Left ventricle myocardium inferior (tissue), 1 donor: ENCODE measurements at regions of chr6 and their contacts with region 1.

Region 1: DNA sequence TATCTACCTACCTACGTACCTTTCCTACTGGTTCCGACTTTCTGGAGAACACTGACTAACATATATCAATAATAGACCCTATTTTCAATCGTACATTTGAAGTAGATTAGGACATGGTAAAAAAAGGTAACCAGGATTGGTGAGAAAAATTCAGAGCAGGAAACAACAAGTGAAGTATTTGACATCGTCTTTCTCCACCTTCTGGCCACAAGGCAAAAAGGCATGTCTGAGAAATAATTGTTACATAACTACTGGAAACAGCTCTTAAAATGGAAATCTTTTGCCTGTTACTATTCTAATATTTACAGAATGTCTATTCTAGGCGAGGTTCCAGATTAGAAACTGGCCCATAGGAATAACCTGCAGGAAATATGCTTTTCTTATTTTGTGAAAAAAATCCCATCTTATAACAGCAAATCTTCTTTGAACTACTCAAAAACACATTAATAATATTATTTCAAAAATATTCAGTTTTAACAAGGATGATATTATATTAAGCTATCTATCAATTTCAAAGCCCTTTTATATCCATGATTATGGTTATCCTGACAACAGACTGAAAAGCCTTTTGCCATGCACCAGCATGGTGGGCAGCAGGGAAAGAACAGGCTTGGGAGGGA is 80.8 kb downstream of the RCAN2 start:
- DNase-seq: no peak
- H3K4me3 ChIP-seq: no peak overlapping the region
- H3K27ac ChIP-seq: peak overlapping the region; percentile 65
- H3K4me1 ChIP-seq: peaks cover 90% of the 10 kb centered on the region
- H3K27me3 ChIP-seq: no peaks in the 10 kb centered on the region
- CTCF ChIP-seq: peak; percentile 92

Region 2: GRCh38 chr6:46090115-46091079 is 320.0 kb before region 1 on chr6:
- intact Hi-C with region 1: loop called (anchors 5 kb)
- DNase-seq: peak; percentile 30
- H3K4me3 ChIP-seq: no peak overlapping the region
- H3K27ac ChIP-seq: no peak overlapping the region
- H3K4me1 ChIP-seq: no peaks in the 10 kb centered on the region
- H3K27me3 ChIP-seq: no peaks in the 10 kb centered on the region
- CTCF ChIP-seq: peak; percentile 88

Region 3: GRCh38 chr6:46221222-46221793 is 189.1 kb before region 1 on chr6:
- intact Hi-C with region 1: loop called (anchors 2 kb)
- DNase-seq: no peak
- H3K4me3 ChIP-seq: no peak overlapping the region
- H3K27ac ChIP-seq: no peak overlapping the region
- H3K4me1 ChIP-seq: peaks cover 40% of the 10 kb centered on the region
- H3K27me3 ChIP-seq: no peaks in the 10 kb centered on the region
- CTCF ChIP-seq: peak; percentile 92